ENCODE measurements at regions of chr9 and their contacts with region 1.

Region 1: GRCh38 chr9:14768405-14769229 is 46.1 kb upstream of the CER1 start:
- DNase-seq: peak in 6 of 7 donors; percentile 25 to 57 (median 39)
- H3K4me3 ChIP-seq: no peak overlapping the region
- H3K27ac ChIP-seq: no peak overlapping the region
- H3K4me1 ChIP-seq: no peaks in the 10 kb centered on the region
- H3K27me3 ChIP-seq: no peaks in the 10 kb centered on the region
- CTCF ChIP-seq: peak; percentile 61 to 82 (median 74)
- POLR2A ChIP-seq: no peak

Region 2: GRCh38 chr9:14616188-14616982 is 152.2 kb before region 1 on chr9:
- intact Hi-C with region 1: loop called in 1 of 2 experiments (anchors 5 kb)
- DNase-seq: peak in 1 of 7 donors; percentile 13
- H3K4me3 ChIP-seq: no peak overlapping the region
- H3K27ac ChIP-seq: no peak overlapping the region
- H3K4me1 ChIP-seq: no peaks in the 10 kb centered on the region
- H3K27me3 ChIP-seq: no peaks in the 10 kb centered on the region
- CTCF ChIP-seq: peak; percentile 50 to 72 (median 66)
- POLR2A ChIP-seq: no peak

Region 3: GRCh38 chr9:14677406-14677805 is 91.2 kb before region 1 on chr9:
- intact Hi-C with region 1: no loop called
- DNase-seq: no peak
- H3K4me3 ChIP-seq: peak overlapping the region in 1 of 4 donors; percentile 6
- H3K27ac ChIP-seq: peak overlapping the region in 1 of 5 donors; percentile 6
- H3K4me1 ChIP-seq: peaks cover 0 to 10% of the 10 kb centered on the region in 2 donors
- H3K27me3 ChIP-seq: no peaks in the 10 kb centered on the region
- CTCF ChIP-seq: no peak
- POLR2A ChIP-seq: no peak

Region 4: GRCh38 chr9:14941501-14942405 is 173.1 kb after region 1 on chr9:
- intact Hi-C with region 1: no loop called
- DNase-seq: no peak
- H3K4me3 ChIP-seq: no peak overlapping the region
- H3K27ac ChIP-seq: peak overlapping the region in 1 of 5 donors; percentile 7
- H3K4me1 ChIP-seq: no peaks in the 10 kb centered on the region
- H3K27me3 ChIP-seq: no peaks in the 10 kb centered on the region
- CTCF ChIP-seq: no peak
- POLR2A ChIP-seq: no peak